Naive thymus-derived CD4-positive, alpha-beta T cell (primary cell): ENCODE measurements at regions of chr1 and their contacts with region 1.

Region 1: DNA sequence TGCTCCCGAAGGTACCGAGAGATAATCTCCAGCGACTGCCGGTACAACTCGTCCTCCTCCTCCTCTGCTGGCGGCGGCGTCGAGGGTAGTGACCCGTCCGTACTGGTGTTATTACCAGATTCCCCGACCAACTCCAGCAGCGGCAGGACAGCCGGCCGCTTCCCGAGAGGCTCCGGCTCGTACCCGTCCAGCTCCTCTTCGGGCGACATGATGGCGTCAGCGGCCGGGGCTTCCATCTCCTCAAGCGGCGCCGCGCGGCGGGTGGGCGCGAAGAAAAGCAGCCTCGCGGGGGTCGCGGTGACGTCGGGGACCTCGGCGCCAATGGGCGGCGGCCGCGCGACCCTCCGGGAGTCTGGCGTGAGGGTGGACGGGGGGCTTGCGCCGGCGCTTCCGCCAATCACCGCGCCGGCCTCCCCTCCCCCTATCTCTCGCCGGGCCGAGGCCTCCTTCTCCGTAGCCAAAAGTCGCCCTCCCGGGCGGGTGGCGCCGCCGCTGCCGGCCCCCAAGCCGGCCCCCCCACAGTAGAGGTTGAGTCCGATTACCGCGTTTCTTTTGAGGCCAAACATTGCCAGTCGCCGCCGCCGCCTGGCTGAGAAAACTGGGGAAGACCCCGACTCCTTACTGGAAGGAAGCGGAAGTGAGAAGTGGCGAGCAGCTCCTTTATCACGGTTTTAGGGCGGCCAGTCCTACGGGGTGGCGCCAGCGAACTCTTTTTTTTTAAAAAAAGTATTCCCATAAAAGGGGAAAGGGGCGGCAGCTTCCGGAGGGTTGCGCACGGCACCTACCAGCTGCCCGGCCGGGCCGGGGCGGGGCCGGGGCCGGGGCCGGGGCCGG is at the start of gene MCL1:
- DNase-seq: peak; percentile 75 to 88 (median 83)
- ATAC-seq: peak; percentile 90
- H3K4me3 ChIP-seq: peak within 1 kb of the TSS; percentile 95
- H3K4me3 Mint-ChIP-seq: peak within 1 kb of the TSS; percentile 92 to 99 (median 95)
- H3K27ac ChIP-seq: peak within 1 kb of the TSS; percentile 97
- H3K27ac Mint-ChIP-seq: peak within 1 kb of the TSS; percentile 96 to 99 (median 98)
- H3K4me1 ChIP-seq: peaks cover 3 to 15% of the 10 kb centered on the region in 2 donors
- H3K4me1 Mint-ChIP-seq: peaks cover 25 to 39% (median 29%) of the 10 kb centered on the region in 7 donors
- H3K27me3 ChIP-seq: no peaks in the 10 kb centered on the region
- H3K27me3 Mint-ChIP-seq: peaks cover 0 to 7% (median 0%) of the 10 kb centered on the region in 5 donors
- total RNA-seq, gene MCL1: 302 to 1,400 (median 377) TPM

Region 2: GRCh38 chr1:150034336-150034735 is 544.8 kb before region 1 on chr1:
- CTCF ChIA-PET with region 1: no interaction called
- POLR2A ChIA-PET with region 1: no interaction called
- intact Hi-C with region 1: no loop called
- DNase-seq: no peak
- ATAC-seq: no peak
- H3K4me3 ChIP-seq: no peak overlapping the region
- H3K4me3 Mint-ChIP-seq: no peak overlapping the region
- H3K27ac ChIP-seq: no peak overlapping the region
- H3K27ac Mint-ChIP-seq: no peak overlapping the region
- H3K4me1 ChIP-seq: no peaks in the 10 kb centered on the region
- H3K4me1 Mint-ChIP-seq: no peaks in the 10 kb centered on the region
- H3K27me3 ChIP-seq: no peaks in the 10 kb centered on the region
- H3K27me3 Mint-ChIP-seq: peaks cover 0 to 20% (median 0%) of the 10 kb centered on the region in 5 donors

Region 3: GRCh38 chr1:150567717-150568593 is 11.2 kb before region 1 on chr1:
- CTCF ChIA-PET with region 1: interaction called, 300 read pairs
- POLR2A ChIA-PET with region 1: interaction called, 1,237 read pairs
- intact Hi-C with region 1: loop called (anchors 1 kb)
- DNase-seq: peak in 5 of 9 donors; percentile 49 to 70 (median 62)
- ATAC-seq: peak; percentile 5
- H3K4me3 ChIP-seq: peak overlapping the region; percentile 73
- H3K4me3 Mint-ChIP-seq: peak overlapping the region; percentile 84 to 95 (median 90)
- H3K27ac ChIP-seq: peak overlapping the region; percentile 97
- H3K27ac Mint-ChIP-seq: peak overlapping the region; percentile 96 to 100 (median 97)
- H3K4me1 ChIP-seq: peaks cover 92 to 96% of the 10 kb centered on the region in 2 donors
- H3K4me1 Mint-ChIP-seq: peaks cover 41 to 95% (median 85%) of the 10 kb centered on the region in 7 donors
- H3K27me3 ChIP-seq: no peaks in the 10 kb centered on the region
- H3K27me3 Mint-ChIP-seq: no peaks in the 10 kb centered on the region

Region 4: DNA sequence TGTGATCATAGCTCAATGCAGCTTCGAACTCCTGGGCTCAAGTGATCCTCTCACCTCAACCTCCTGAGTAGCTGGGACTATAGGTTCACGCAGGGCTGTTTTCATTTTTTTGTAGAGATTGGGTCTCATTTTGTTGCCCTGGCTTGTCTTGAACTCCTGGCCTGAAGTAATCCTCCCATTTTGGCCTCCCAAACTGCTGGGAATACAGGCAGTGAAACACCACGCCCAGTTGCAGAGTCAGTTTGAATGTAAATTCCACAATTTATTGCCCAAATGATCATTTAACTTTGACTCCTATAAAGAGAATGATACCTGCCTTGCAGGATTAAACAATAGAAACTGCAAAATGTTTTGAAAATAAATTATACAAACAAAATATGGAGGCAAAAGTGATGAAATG is 107.1 kb after region 1 on chr1:
- CTCF ChIA-PET with region 1: no interaction called
- POLR2A ChIA-PET with region 1: no interaction called
- intact Hi-C with region 1: no loop called
- DNase-seq: no peak
- ATAC-seq: no peak
- H3K4me3 ChIP-seq: no peak overlapping the region
- H3K4me3 Mint-ChIP-seq: no peak overlapping the region
- H3K27ac ChIP-seq: no peak overlapping the region
- H3K27ac Mint-ChIP-seq: peak overlapping the region in 2 of 9 donors; percentile 18 to 65
- H3K4me1 ChIP-seq: peaks cover 4 to 10% of the 10 kb centered on the region in 2 donors
- H3K4me1 Mint-ChIP-seq: peaks cover 10 to 34% (median 22%) of the 10 kb centered on the region in 7 donors
- H3K27me3 ChIP-seq: no peaks in the 10 kb centered on the region
- H3K27me3 Mint-ChIP-seq: no peaks in the 10 kb centered on the region

Region 5: DNA sequence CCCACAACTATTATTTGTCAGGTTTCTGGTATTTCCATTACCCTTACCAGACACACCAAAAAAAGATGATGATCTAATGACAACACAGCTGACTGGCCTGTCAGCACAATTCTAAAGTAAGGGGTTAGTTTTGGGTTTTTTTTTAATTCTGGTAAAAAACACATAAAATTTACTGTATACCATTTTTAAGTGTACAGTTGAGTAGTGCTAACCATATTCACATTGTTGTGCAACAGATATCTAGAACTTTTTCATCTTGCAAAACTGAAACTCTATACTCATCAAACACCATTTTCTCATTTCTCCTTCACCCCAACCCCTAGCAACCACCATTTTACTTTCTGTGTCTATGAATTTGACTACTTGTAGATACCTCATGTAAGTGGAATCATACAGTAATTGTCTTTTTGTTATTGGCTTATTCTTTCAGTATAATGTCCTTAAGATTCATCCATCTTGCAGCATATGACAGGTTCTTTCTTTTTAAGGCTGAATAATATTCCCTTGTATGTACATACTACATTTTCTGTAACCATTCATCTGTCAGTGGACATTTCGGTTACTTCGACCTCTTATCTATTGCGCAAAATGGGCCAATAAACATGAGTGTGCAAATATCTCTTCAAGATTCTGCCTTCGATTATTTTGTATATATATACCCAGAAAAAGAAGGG is 267.4 kb after region 1 on chr1:
- CTCF ChIA-PET with region 1: no interaction called
- POLR2A ChIA-PET with region 1: no interaction called
- intact Hi-C with region 1: no loop called
- DNase-seq: no peak
- ATAC-seq: no peak
- H3K4me3 ChIP-seq: no peak overlapping the region
- H3K4me3 Mint-ChIP-seq: no peak overlapping the region
- H3K27ac ChIP-seq: no peak overlapping the region
- H3K27ac Mint-ChIP-seq: peak overlapping the region in 2 of 9 donors; percentile 3 to 29
- H3K4me1 ChIP-seq: peaks cover 0 to 12% of the 10 kb centered on the region in 2 donors
- H3K4me1 Mint-ChIP-seq: peaks cover 15 to 31% (median 19%) of the 10 kb centered on the region in 7 donors
- H3K27me3 ChIP-seq: no peaks in the 10 kb centered on the region
- H3K27me3 Mint-ChIP-seq: no peaks in the 10 kb centered on the region